ENCODE measurements at regions of chr12 and their contacts with region 1.

Region 1: GRCh38 chr12:104480826-104481440 is 24.2 kb downstream of the CHST11 start:
- H3K4me3 Mint-ChIP-seq: peak overlapping the region; percentile 26
- H3K27ac Mint-ChIP-seq: peak overlapping the region; percentile 79
- H3K4me1 Mint-ChIP-seq: peaks cover 94% of the 10 kb centered on the region
- H3K27me3 Mint-ChIP-seq: no peaks in the 10 kb centered on the region

Region 2: DNA sequence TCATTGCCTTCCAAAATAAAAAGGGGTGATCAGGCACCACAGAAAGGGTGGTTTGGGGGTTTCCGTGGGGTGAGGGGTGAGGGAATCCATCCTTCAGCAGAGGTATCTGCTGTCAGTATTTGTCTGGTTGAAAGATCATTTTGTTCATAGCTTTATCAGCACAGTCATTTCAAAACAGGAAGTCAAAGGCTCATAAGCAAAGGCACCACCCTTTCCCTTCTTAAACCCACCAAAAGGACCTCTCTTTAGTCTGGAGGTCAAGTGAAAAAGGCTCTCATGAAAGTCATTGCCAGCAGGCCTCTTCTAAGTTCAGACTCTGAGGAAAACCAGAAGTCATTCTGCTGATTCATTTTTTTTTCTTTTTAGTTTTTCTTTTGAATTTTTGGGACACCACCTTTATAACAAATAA is 18.0 kb before region 1 on chr12:
- intact Hi-C with region 1: loop called (anchors 2 kb)
- H3K4me3 Mint-ChIP-seq: peak overlapping the region; percentile 58
- H3K27ac Mint-ChIP-seq: peak overlapping the region; percentile 92
- H3K4me1 Mint-ChIP-seq: peaks cover 72% of the 10 kb centered on the region
- H3K27me3 Mint-ChIP-seq: no peaks in the 10 kb centered on the region

Measured in dendritic cell treated with granulocyte-macrophage colony-stimulating factor and Interleukin-4, amounts not matched to agents 40 ng/mL and 50 ng/mL, for 4 days (primary cell).